Ovary (tissue), 10 donors: ENCODE measurements at regions of chr1 and their contacts with region 1.

Region 1: DNA sequence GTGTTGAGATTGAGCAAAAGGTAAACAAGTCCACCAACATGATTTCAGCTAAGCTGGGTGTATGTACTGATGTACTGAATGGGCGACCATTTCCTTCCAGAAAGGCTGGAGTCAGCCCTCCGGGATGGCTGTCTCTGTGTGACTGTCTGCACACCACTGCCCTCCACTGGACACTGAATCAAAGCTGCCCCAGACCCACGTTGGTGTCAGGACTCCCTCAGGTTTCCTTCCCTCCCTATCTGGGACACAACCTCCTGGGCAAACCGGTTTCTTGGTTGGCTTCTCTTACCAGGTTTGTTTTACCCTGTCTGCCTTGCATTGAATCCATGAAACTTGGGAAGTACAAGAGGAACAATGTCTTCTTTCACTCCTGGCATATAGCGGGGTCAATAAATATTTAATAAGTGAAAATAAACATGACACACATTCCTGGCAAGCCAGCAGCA is 5.3 kb upstream of the SRP9 start:
- DNase-seq: peak; percentile 82 to 90 (median 86)
- H3K4me3 ChIP-seq: no peak overlapping the region
- H3K27ac ChIP-seq: peak overlapping the region in 1 of 2 donors; percentile 17
- H3K4me1 ChIP-seq: peaks cover 29% of the 10 kb centered on the region
- H3K27me3 ChIP-seq: no peaks in the 10 kb centered on the region
- CTCF ChIP-seq: peak; percentile 41 to 92 (median 81)
- EP300 ChIP-seq: no peak
- POLR2A ChIP-seq: no peak

Region 2: DNA sequence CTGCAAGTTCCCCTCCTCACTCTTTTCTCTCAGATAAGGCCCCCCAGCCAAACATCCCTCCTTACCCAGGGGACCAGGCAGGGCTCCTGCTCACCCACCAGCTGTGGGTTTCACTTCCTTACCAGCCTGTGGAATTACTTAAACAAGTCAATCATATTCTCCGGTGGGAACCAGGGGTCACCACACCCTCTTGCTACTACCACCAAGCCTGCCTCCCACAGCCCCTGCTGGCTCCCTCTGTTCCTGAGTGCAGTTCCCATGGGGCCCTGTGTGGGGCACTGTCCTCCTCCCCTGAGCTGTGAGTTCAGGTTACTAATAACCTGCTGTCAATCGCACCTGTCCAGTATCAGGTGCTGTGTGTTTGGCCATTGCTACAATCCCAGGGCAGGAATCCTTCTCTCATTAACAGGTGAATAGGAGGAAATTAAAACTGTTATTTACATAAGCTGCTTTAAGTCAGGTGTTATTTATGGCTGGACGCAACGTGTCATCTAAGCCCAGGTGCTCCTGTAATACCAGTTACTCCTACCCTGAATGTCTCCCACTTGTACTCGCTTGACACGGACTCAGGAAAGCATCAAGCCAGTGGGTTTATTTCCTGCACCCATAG is 291.4 kb before region 1 on chr1:
- intact Hi-C with region 1: loop called (anchors 2 to 5 kb)
- DNase-seq: peak in 1 of 5 donors; percentile 3
- H3K4me3 ChIP-seq: no peak overlapping the region
- H3K27ac ChIP-seq: no peak overlapping the region
- H3K4me1 ChIP-seq: peaks cover 3% of the 10 kb centered on the region
- H3K27me3 ChIP-seq: no peaks in the 10 kb centered on the region
- CTCF ChIP-seq: no peak
- EP300 ChIP-seq: no peak
- POLR2A ChIP-seq: no peak

Region 3: DNA sequence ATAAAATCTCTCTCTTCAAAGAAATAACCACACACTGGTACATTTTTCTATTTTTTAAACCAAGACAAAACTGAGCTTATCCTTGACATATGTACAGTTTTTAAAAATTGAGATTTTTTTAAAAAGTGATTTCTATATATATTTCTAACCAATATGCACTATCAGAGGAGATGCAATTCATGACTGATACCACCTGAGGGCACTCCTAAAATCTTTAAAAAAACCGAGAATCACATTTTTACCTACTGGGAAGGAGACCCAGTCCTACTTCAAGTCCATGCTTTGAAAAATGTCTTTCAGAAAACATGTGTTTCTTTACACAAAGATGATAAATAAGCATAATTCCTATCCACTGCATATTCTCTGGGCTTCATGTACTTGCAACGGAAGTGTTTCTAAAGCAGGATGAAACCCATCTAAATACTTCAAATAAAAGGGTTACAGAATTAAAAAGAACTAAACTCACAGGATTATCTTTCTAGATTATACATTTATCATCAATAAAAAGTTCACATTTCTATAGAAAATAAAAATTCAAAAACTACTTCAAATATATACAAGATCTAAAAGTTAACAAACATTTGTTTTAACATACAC is 218.0 kb before region 1 on chr1:
- intact Hi-C with region 1: loop called in 3 of 4 experiments (anchors 5 kb)
- DNase-seq: no peak
- H3K4me3 ChIP-seq: no peak overlapping the region
- H3K27ac ChIP-seq: no peak overlapping the region
- H3K4me1 ChIP-seq: no peaks in the 10 kb centered on the region
- H3K27me3 ChIP-seq: no peaks in the 10 kb centered on the region
- CTCF ChIP-seq: peak in 2 of 3 donors; percentile 39 to 71
- EP300 ChIP-seq: no peak
- POLR2A ChIP-seq: no peak

Region 4: GRCh38 chr1:225746361-225747179 is 25.8 kb before region 1 on chr1:
- intact Hi-C with region 1: no loop called
- DNase-seq: peak; percentile 77 to 85 (median 79)
- H3K4me3 ChIP-seq: peak overlapping the region; percentile 53
- H3K27ac ChIP-seq: peak overlapping the region; percentile 86 to 93
- H3K4me1 ChIP-seq: peaks cover 7% of the 10 kb centered on the region
- H3K27me3 ChIP-seq: no peaks in the 10 kb centered on the region
- CTCF ChIP-seq: peak in 2 of 3 donors; percentile 15 to 16
- EP300 ChIP-seq: no peak
- POLR2A ChIP-seq: no peak

Region 5: GRCh38 chr1:225977937-225978748 is 205.8 kb after region 1 on chr1:
- intact Hi-C with region 1: loop called in 3 of 4 experiments (anchors 5 to 10 kb)
- DNase-seq: peak in 1 of 5 donors; percentile 6
- H3K4me3 ChIP-seq: no peak overlapping the region
- H3K27ac ChIP-seq: no peak overlapping the region
- H3K4me1 ChIP-seq: peaks cover 3% of the 10 kb centered on the region
- H3K27me3 ChIP-seq: no peaks in the 10 kb centered on the region
- CTCF ChIP-seq: no peak
- EP300 ChIP-seq: no peak
- POLR2A ChIP-seq: no peak